ENCODE measurements at regions of chr10 and their contacts with region 1.

Region 1: GRCh38 chr10:110304780-110305421 is at the start of gene SMNDC1:
- DNase-seq: peak; percentile 98
- ATAC-seq: peak; percentile 93
- H3K4me3 Mint-ChIP-seq: peak within 1 kb of the TSS; percentile 95
- H3K27ac Mint-ChIP-seq: peak within 1 kb of the TSS; percentile 97
- H3K4me1 Mint-ChIP-seq: peaks cover 47% of the 10 kb centered on the region
- H3K27me3 Mint-ChIP-seq: peaks cover under 1% of the 10 kb centered on the region
- total RNA-seq, gene SMNDC1: 37.5 to 37.8 TPM

Region 2: DNA sequence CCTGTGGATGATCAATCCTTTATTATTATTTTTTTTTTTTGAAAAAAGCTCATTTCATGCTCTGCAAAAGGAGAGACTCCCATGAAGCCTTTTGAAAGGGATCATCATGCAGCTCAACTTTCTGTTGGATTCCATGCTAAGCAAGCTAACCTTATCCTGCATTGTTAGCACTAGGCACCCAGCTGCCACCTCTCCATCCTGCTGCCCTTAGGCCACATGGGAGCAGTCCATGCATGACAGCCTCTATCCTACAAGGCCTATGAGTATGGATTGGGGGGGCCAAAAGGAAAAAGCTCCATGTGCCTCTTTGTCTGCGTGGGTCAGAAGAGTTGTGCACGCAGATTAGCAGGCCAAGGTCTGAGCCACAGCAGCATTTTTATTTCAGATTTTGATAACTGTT is 19.4 kb before region 1 on chr10:
- CTCF ChIA-PET with region 1: interaction called, 10 read pairs
- POLR2A ChIA-PET with region 1: no interaction called
- DNase-seq: no peak
- ATAC-seq: no peak
- H3K4me3 Mint-ChIP-seq: no peak overlapping the region
- H3K27ac Mint-ChIP-seq: no peak overlapping the region
- H3K4me1 Mint-ChIP-seq: no peaks in the 10 kb centered on the region
- H3K27me3 Mint-ChIP-seq: no peaks in the 10 kb centered on the region

Region 3: DNA sequence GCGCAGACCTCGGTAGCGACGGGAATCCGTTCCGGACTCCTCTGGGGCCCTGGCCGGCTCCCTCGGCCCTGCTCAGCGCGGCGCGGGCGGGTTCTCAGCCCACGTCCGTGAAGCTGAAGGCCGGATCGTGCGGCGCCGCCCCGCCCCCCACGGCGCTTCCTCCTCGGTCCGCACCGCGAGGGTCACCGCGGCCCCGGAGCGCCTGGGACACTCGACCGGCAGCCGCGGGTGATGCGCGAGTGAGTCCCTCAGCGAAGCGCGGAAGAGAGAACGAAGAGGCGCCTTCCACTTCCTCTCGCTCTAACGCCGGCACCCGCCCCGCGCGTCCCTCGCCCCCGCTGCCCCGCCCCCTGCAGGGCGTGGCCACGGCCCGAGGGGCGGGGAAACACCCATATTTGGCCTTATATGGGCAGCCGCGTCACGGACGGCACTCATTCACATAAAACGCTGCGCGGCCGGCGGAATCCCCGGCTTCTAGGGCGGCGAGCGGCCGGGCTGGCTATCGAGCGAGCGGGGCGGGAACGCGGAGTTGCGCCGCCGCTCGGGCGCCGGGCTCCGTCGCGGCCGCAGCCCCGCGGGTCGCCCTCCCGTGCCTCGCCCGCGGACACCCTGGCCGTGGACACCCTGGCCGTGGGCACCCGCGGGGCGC is 192.7 kb after region 1 on chr10 and contains the start of gene DUSP5:
- CTCF ChIA-PET with region 1: interaction called, 31 read pairs
- POLR2A ChIA-PET with region 1: interaction called, 5 read pairs
- DNase-seq: peak; percentile 95
- ATAC-seq: peak; percentile 74
- H3K4me3 Mint-ChIP-seq: peak within 1 kb of the TSS; percentile 97
- H3K27ac Mint-ChIP-seq: peak within 1 kb of the TSS; percentile 89
- H3K4me1 Mint-ChIP-seq: peaks cover 56% of the 10 kb centered on the region
- H3K27me3 Mint-ChIP-seq: no peaks in the 10 kb centered on the region
- total RNA-seq, gene DUSP5: 26.8 to 27.8 TPM

Region 4: GRCh38 chr10:110502851-110503301 is 198.0 kb after region 1 on chr10:
- CTCF ChIA-PET with region 1: interaction called, 31 read pairs
- POLR2A ChIA-PET with region 1: interaction called, 5 read pairs
- DNase-seq: no peak
- ATAC-seq: no peak
- H3K4me3 Mint-ChIP-seq: peak overlapping the region; percentile 97
- H3K27ac Mint-ChIP-seq: peak overlapping the region; percentile 85
- H3K4me1 Mint-ChIP-seq: peaks cover 90% of the 10 kb centered on the region
- H3K27me3 Mint-ChIP-seq: no peaks in the 10 kb centered on the region

Region 5: GRCh38 chr10:110547139-110547761 is 242.3 kb after region 1 on chr10:
- CTCF ChIA-PET with region 1: interaction called, 54 read pairs
- POLR2A ChIA-PET with region 1: interaction called, 4 read pairs
- DNase-seq: peak; percentile 45
- ATAC-seq: peak; percentile 76
- H3K4me3 Mint-ChIP-seq: no peak overlapping the region
- H3K27ac Mint-ChIP-seq: no peak overlapping the region
- H3K4me1 Mint-ChIP-seq: peaks cover 13% of the 10 kb centered on the region
- H3K27me3 Mint-ChIP-seq: peaks cover 24% of the 10 kb centered on the region

Region 6: DNA sequence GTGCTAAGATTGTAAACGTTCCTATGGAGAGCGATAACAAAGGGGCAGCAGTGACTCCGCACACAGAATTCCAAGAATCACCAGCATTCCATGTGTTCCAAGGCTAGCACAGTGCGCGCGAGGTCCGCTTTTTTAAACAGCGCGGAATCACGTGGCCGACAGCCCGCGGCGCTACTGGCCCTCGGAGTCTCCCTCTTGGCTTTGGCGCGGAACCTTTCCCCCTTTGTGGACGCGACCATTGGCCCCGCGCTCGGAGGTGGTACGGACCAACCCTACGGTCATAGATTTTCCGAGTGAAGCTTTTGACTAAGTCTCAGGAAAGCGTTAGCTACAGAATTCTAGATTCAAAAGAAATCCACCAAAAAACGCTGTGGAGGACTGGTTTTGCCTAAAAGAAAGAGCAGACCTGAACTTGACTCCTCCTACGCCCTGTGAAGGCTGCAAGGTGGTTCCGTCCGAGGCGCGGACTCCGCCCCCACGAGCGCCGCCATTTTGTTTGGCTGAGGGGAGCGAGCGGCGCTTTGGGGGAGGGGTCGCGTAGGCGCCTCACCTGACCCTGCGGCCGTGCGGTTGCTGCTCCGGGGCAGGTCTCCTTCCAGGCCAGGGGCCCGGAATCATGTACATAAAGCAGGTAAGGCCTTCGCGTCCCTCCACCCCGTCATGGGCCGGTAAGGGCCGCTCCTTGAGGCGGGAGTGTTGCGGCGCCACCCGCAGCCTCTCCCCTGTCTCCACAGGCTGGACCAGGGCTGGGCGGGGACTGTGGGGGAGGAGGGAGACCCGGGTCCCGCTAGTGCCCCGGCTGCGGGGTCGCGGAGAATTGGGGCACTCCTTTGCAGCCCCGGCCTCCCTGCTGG is 262.5 kb after region 1 on chr10 and contains the start of gene SMC3:
- CTCF ChIA-PET with region 1: interaction called, 41 read pairs
- POLR2A ChIA-PET with region 1: interaction called, 4 read pairs
- DNase-seq: peak; percentile 94
- ATAC-seq: peak; percentile 85
- H3K4me3 Mint-ChIP-seq: peak within 1 kb of the TSS; percentile 95
- H3K27ac Mint-ChIP-seq: peak within 1 kb of the TSS; percentile 99
- H3K4me1 Mint-ChIP-seq: peaks cover 39% of the 10 kb centered on the region
- H3K27me3 Mint-ChIP-seq: peaks cover 17% of the 10 kb centered on the region
- total RNA-seq, gene SMC3: 75.6 to 82.2 TPM

Region 7: GRCh38 chr10:110600487-110601101 is 295.7 kb after region 1 on chr10:
- CTCF ChIA-PET with region 1: interaction called, 64 read pairs
- POLR2A ChIA-PET with region 1: interaction called, 3 read pairs
- DNase-seq: peak; percentile 64
- ATAC-seq: peak; percentile 67
- H3K4me3 Mint-ChIP-seq: no peak overlapping the region
- H3K27ac Mint-ChIP-seq: no peak overlapping the region
- H3K4me1 Mint-ChIP-seq: no peaks in the 10 kb centered on the region
- H3K27me3 Mint-ChIP-seq: no peaks in the 10 kb centered on the region